Activated T-helper 1 cell treated with anti-CD3 and anti-CD28 coated beads, Interleukin-12 subunit alpha, Interleukin-12 subunit beta, Interleukin-2, Interleukin-4 antibody, amounts not matched to agents 30 ng/mL and 10 ng/mL and 1 ng/mL, durations not matched to agents 14 hours and 24 hours and 36 hours (primary cell): ENCODE measurements at regions of chr14 and their contacts with region 1.

Region 1: DNA sequence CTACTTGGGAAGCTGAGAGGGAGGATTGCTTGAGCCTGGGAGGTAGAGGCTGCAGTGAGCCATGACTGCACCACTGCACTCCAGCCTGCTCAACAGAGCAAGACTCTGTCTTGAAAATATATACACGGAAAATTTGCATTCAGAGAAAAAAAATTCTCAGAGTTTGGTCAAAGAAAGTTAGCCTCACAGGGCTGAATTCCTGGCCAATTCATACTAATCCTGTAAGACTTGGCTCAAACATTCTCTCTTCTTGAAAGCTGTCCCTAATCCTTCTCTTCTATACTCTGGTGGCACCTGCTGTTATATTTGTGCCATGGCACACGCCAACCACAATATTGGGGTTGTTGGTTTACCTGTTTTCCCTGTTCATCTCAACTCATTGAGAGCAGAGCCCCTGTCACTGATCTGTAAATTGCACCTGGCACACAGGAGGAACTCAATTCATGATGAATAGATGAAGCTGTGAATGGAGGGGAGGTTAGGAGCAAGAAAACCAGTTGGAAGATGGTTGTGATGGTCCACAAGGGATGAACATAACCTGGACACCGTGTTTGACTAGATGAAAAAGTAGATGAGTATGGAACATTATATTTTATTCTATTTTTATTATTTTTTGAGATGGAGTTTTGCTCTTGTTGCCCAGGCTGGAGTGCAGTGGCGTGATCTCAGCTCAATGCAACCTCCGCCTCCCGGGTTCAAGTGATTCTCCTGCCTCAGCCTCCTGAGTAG is 36.8 kb upstream of the SPTSSA start:
- DNase-seq: no peak
- H3K4me3 Mint-ChIP-seq: no peak overlapping the region
- H3K27ac Mint-ChIP-seq: no peak overlapping the region
- H3K4me1 Mint-ChIP-seq: no peaks in the 10 kb centered on the region
- H3K27me3 Mint-ChIP-seq: peaks cover 1% of the 10 kb centered on the region

Region 2: DNA sequence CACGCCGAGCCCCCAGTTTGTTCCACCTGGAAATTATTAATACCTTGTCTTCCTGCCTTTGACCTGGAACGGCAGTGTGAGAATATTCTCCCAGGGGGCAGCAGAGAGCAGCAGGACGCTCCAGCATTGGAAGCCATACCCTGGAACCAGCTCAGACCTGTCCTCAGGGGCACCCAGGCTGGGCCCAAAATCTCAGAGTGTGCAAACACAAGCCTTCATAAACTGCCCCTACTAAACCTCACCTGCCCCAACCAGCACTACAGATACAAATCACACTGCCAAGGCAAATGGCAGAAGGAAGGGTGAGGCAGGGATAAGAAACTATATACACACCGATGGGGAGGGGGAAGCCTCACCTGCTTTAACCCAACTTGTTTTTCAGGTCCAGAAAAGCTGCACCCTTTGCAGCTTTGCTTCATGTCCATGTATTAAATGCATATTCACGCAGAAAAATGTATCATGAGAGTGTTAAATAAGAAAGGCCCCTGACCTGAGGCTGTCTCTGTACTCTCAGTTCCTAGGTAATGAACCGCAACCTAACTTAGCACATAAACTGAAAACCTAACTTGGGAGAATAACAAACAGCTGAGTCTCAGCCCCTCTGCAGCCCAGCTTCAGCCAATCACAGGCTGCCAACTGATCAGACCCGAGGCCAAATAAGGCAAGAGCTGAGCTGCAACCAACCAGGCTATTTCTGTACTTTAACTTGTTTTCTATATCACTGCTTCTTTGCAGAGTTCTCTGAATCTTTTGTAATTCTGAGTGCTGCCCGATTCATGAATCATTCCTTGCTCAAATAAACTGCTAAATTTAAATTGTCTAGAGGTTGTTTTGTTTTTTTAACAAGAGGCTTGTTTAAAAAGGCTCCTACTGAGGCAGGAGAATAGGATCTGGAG is 166.9 kb before region 1 on chr14:
- intact Hi-C with region 1: loop called (anchors 1 kb)
- DNase-seq: peak; percentile 24
- H3K4me3 Mint-ChIP-seq: no peak overlapping the region
- H3K27ac Mint-ChIP-seq: no peak overlapping the region
- H3K4me1 Mint-ChIP-seq: peaks cover 13% of the 10 kb centered on the region
- H3K27me3 Mint-ChIP-seq: no peaks in the 10 kb centered on the region